Left ventricle myocardium inferior (tissue), 1 donor: ENCODE measurements at regions of chr3 and their contacts with region 1.

Region 1: GRCh38 chr3:157487339-157487738 is 15.9 kb downstream of the VEPH1 start:
- DNase-seq: no peak
- H3K4me3 ChIP-seq: no peak overlapping the region
- H3K27ac ChIP-seq: no peak overlapping the region
- H3K4me1 ChIP-seq: no peaks in the 10 kb centered on the region
- H3K27me3 ChIP-seq: no peaks in the 10 kb centered on the region
- CTCF ChIP-seq: no peak

Region 2: DNA sequence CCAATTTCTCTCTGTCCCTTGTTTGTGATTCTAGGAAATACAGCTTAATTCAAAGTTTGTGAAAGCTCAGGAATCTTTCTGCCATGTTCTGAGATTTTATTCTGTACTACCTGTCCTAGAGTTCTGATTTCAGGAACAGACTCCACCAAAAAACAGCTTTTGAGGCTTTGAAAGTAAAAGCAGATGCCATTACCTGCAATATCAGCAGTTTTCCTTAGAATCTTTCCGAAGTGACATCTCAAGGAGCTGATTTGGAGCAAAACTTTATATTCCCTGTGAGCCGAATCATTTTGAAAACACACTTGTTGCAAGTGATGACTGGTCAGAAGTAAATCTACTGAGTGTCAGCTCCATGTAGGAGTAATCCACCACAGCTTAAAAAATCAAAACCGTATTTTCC is 268.1 kb before region 1 on chr3:
- intact Hi-C with region 1: loop called (anchors 5 kb)
- DNase-seq: no peak
- H3K4me3 ChIP-seq: no peak overlapping the region
- H3K27ac ChIP-seq: no peak overlapping the region
- H3K4me1 ChIP-seq: no peaks in the 10 kb centered on the region
- H3K27me3 ChIP-seq: no peaks in the 10 kb centered on the region
- CTCF ChIP-seq: no peak

Region 3: DNA sequence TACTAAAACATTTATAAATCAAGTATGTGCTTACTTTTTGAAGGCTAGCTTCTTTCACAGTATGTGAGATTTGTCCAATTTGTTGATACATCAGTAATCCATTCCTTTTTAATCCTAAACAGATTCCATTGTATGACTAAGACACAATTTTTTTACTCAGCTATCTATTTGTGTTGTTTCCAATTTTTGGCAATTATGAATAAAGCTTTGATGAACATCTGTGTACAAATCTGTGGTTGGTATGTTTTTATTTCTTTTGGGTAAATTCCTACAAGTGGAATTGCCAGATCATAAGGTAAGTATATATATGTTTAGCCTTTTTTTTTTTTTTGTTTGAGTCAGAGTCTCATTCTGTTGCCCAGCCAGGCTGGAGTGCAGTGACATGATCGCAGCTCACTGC is 72.1 kb after region 1 on chr3:
- intact Hi-C with region 1: no loop called
- DNase-seq: no peak
- H3K4me3 ChIP-seq: no peak overlapping the region
- H3K27ac ChIP-seq: no peak overlapping the region
- H3K4me1 ChIP-seq: no peaks in the 10 kb centered on the region
- H3K27me3 ChIP-seq: no peaks in the 10 kb centered on the region
- CTCF ChIP-seq: no peak

Region 4: GRCh38 chr3:157718800-157719199 is 231.5 kb after region 1 on chr3:
- intact Hi-C with region 1: no loop called
- DNase-seq: no peak
- H3K4me3 ChIP-seq: no peak overlapping the region
- H3K27ac ChIP-seq: no peak overlapping the region
- H3K4me1 ChIP-seq: no peaks in the 10 kb centered on the region
- H3K27me3 ChIP-seq: no peaks in the 10 kb centered on the region
- CTCF ChIP-seq: no peak